CD4-positive, alpha-beta memory T cell (primary cell): ENCODE measurements at regions of chr4 and their contacts with region 1.

Region 1: GRCh38 chr4:183659029-183659871 is at the starts of genes RWDD4 and TRAPPC11:
- DNase-seq: peak; percentile 95 to 98 (median 96)
- H3K4me3 ChIP-seq: peak within 1 kb of the TSS; percentile 89 to 91
- H3K4me3 Mint-ChIP-seq: peak within 1 kb of the TSS; percentile 91 to 98 (median 94)
- H3K27ac ChIP-seq: peak within 1 kb of the TSS; percentile 93
- H3K27ac Mint-ChIP-seq: peak within 1 kb of the TSS; percentile 75 to 99 (median 97)
- H3K4me1 ChIP-seq: peaks cover 37% of the 10 kb centered on the region
- H3K4me1 Mint-ChIP-seq: peaks cover 25 to 54% (median 41%) of the 10 kb centered on the region in 4 donors
- H3K27me3 ChIP-seq: no peaks in the 10 kb centered on the region
- H3K27me3 Mint-ChIP-seq: no peaks in the 10 kb centered on the region
- total RNA-seq, gene RWDD4: 12.0 to 13.8 TPM
- total RNA-seq, gene TRAPPC11: 42.2 to 51.0 TPM

Region 2: DNA sequence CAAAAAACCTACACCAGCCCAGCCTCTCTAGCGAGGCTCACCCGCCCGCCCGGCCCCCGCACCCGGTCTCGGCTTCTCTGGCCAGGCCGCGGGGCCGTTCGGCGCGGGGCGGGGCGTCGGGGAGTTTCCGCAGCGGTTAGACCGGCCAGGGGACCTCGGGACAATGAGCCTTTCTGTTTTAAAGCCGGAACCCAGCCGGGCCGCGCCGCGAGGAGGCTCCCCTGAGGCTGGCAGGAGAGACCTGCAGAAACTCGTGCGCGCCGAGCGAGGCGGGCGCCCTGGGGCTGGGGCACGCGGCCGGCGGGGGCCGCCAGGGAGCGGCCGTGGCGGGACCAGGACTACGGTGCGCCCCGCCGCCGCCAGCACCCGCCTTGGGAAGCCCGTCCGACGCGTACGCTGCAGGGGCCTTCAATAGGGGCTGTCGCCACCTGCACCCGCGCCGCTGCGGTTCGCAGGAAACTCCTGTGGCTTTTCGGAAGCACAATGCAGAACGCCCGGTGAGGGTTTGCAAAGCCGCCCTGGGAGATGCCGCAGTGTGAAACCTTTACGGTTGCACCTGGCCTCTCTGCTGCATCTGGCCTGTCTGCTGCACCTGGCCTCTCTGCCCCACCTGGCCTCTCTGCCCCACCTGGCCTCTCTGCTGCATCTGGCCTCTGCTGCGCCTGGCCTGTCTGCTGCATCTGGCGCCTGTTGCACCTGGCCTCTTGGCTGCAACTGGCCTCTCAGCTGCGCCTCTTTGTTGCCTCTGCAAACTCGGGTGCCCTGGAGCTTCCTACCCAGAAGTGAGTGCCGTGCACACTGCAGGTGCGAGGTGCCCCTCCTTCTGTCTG is 63.7 kb after region 1 on chr4:
- CTCF ChIA-PET with region 1: no interaction called
- POLR2A ChIA-PET with region 1: no interaction called
- intact Hi-C with region 1: loop called (anchors 5 kb)
- DNase-seq: peak; percentile 42 to 62 (median 51)
- H3K4me3 ChIP-seq: peak overlapping the region in 1 of 2 donors; percentile 64
- H3K4me3 Mint-ChIP-seq: peak overlapping the region; percentile 85 to 94 (median 90)
- H3K27ac ChIP-seq: no peak overlapping the region
- H3K27ac Mint-ChIP-seq: peak overlapping the region; percentile 19 to 88 (median 64)
- H3K4me1 ChIP-seq: peaks cover 9% of the 10 kb centered on the region
- H3K4me1 Mint-ChIP-seq: peaks cover 10 to 16% (median 15%) of the 10 kb centered on the region in 4 donors
- H3K27me3 ChIP-seq: no peaks in the 10 kb centered on the region
- H3K27me3 Mint-ChIP-seq: peaks cover 0 to 5% of the 10 kb centered on the region in 2 donors